IMR-90 (cell line): ENCODE measurements at regions of chr11 and their contacts with region 1.

Region 1: GRCh38 chr11:130076778-130077481 is 7.2 kb downstream of the APLP2 start:
- DNase-seq: no peak
- ATAC-seq: no peak
- H3K4me3 ChIP-seq: no peak overlapping the region
- H3K27ac ChIP-seq: no peak overlapping the region
- H3K4me1 ChIP-seq: no peaks in the 10 kb centered on the region
- H3K27me3 ChIP-seq: no peaks in the 10 kb centered on the region
- CTCF ChIP-seq: no peak
- POLR2A ChIP-seq: no peak
- RAD21 ChIP-seq: no peak

Region 2: DNA sequence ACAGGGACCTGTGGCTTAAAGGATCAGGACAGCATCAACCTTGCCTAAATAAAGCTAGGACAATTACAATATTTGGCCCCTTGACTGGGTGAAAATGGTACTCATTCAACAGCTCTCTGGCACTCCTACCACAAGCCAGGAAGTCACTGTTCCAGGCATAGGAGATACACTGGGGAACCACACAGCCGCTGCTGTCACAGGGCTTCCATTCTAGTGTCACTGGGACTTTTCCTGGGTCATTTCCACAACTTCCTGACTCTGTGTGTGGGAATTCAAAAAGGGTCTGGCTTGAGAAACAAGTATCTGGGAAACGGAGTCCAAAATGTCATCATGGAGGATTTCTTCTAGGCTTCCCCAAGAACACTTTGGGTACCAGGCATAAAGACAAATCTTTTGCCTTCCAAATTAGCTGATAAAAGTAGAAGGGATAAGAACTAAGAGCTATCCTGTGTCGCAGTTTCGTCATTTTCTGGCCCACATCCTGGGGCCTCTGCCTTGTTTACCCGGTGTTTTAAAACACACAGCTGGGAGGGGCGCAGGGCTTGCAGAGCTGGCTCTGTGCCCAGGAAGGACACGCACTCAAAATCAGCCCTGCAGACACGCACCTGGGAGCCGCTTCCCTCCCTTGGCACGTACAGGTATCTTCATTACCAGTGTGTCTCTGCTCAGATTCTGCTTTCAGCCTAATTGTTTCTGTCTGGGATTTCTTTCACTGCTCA is 223.3 kb before region 1 on chr11:
- CTCF ChIA-PET with region 1: no interaction called
- POLR2A ChIA-PET with region 1: no interaction called
- dilution Hi-C with region 1: no loop called
- in situ Hi-C with region 1: no loop called
- intact Hi-C with region 1: no loop called
- DNase-seq: peak; percentile 49
- ATAC-seq: peak; percentile 67
- H3K4me3 ChIP-seq: no peak overlapping the region
- H3K27ac ChIP-seq: no peak overlapping the region
- H3K4me1 ChIP-seq: peaks cover 5% of the 10 kb centered on the region; the same call in 1 of the 2 replicates
- H3K27me3 ChIP-seq: peaks cover 22% of the 10 kb centered on the region
- CTCF ChIP-seq: no peak
- POLR2A ChIP-seq: no peak
- RAD21 ChIP-seq: no peak

Region 3: DNA sequence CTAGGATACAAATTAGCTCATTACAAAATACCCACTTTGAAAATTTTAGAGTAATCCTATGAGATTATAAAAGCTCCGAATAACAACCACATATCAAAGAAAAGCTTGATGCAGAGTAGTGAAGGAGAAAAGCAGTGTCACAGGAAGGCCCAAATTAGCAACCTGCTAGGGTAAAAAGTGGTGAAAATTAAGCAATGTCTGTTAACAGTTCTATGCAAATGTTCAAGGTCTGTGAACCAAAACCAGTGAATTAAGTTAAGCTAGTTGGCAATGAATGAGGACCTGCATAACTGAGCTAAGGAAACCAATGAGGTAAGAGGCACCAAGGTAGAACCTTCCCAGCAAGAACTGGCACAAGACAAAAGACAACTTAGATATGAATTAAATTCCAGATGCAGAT is 103.9 kb before region 1 on chr11:
- CTCF ChIA-PET with region 1: interaction called, 11 read pairs
- POLR2A ChIA-PET with region 1: no interaction called
- dilution Hi-C with region 1: no loop called
- in situ Hi-C with region 1: no loop called
- intact Hi-C with region 1: no loop called
- DNase-seq: no peak
- ATAC-seq: no peak
- H3K4me3 ChIP-seq: no peak overlapping the region
- H3K27ac ChIP-seq: no peak overlapping the region
- H3K4me1 ChIP-seq: no peaks in the 10 kb centered on the region
- H3K27me3 ChIP-seq: no peaks in the 10 kb centered on the region
- CTCF ChIP-seq: no peak
- POLR2A ChIP-seq: no peak
- RAD21 ChIP-seq: no peak

Region 4: GRCh38 chr11:130118636-130119387 is 41.9 kb after region 1 on chr11:
- CTCF ChIA-PET with region 1: no interaction called
- POLR2A ChIA-PET with region 1: no interaction called
- dilution Hi-C with region 1: no loop called
- in situ Hi-C with region 1: no loop called
- intact Hi-C with region 1: loop called (anchors 5 kb)
- DNase-seq: no peak
- ATAC-seq: no peak
- H3K4me3 ChIP-seq: no peak overlapping the region
- H3K27ac ChIP-seq: no peak overlapping the region
- H3K4me1 ChIP-seq: peaks cover 3% of the 10 kb centered on the region
- H3K27me3 ChIP-seq: no peaks in the 10 kb centered on the region; the same call in none of the 2 replicates
- CTCF ChIP-seq: no peak
- POLR2A ChIP-seq: no peak
- RAD21 ChIP-seq: no peak

Region 5: GRCh38 chr11:130330101-130330684 is 253.3 kb after region 1 on chr11:
- CTCF ChIA-PET with region 1: no interaction called
- POLR2A ChIA-PET with region 1: no interaction called
- dilution Hi-C with region 1: no loop called
- in situ Hi-C with region 1: no loop called
- intact Hi-C with region 1: no loop called
- DNase-seq: no peak
- ATAC-seq: no peak
- H3K4me3 ChIP-seq: no peak overlapping the region
- H3K27ac ChIP-seq: no peak overlapping the region
- H3K4me1 ChIP-seq: no peaks in the 10 kb centered on the region
- H3K27me3 ChIP-seq: peaks cover 2% of the 10 kb centered on the region; the same call in 1 of the 2 replicates
- CTCF ChIP-seq: no peak
- POLR2A ChIP-seq: no peak
- RAD21 ChIP-seq: no peak